ENCODE measurements at regions of chr9 and their contacts with region 1.

Region 1: GRCh38 chr9:72856972-72857623 is 95.8 kb downstream of the ALDH1A1 start:
- DNase-seq: peak; percentile 28
- ATAC-seq: peak; percentile 68

Region 2: DNA sequence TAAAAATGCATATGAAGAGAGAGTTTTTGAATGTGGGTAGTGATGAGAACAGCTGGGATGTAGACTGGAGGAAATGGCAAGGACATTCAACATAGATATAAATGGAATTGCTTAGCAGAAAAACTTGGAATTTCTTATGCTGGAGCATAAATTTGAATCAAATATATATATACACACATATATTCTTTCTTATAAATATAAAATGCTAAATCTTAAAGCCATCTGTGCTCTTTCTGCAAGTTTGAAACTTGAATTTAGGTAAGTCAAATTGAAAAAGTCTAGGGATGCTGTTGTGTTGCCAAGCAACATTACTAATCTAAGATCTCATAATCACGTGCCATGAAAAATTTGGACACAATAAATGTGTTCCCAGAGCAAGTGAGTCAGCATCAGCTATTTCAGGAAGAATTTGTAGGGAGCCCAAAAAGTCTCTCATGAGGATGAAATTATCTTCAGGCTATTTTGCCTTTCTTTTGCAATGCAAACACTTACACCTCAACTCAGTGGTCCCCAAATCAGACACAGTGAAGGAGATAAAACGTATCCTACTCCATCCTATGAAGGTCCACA is 154.2 kb after region 1 on chr9:
- intact Hi-C with region 1: no loop called
- DNase-seq: no peak
- ATAC-seq: peak; percentile 39

Region 3: GRCh38 chr9:73023025-73023541 is 166.0 kb after region 1 on chr9:
- intact Hi-C with region 1: loop called (anchors 5 kb)
- DNase-seq: no peak
- ATAC-seq: peak; percentile 31

Region 4: GRCh38 chr9:73081979-73082657 is 225.0 kb after region 1 on chr9:
- intact Hi-C with region 1: loop called (anchors 5 kb)
- DNase-seq: no peak
- ATAC-seq: no peak

Region 5: DNA sequence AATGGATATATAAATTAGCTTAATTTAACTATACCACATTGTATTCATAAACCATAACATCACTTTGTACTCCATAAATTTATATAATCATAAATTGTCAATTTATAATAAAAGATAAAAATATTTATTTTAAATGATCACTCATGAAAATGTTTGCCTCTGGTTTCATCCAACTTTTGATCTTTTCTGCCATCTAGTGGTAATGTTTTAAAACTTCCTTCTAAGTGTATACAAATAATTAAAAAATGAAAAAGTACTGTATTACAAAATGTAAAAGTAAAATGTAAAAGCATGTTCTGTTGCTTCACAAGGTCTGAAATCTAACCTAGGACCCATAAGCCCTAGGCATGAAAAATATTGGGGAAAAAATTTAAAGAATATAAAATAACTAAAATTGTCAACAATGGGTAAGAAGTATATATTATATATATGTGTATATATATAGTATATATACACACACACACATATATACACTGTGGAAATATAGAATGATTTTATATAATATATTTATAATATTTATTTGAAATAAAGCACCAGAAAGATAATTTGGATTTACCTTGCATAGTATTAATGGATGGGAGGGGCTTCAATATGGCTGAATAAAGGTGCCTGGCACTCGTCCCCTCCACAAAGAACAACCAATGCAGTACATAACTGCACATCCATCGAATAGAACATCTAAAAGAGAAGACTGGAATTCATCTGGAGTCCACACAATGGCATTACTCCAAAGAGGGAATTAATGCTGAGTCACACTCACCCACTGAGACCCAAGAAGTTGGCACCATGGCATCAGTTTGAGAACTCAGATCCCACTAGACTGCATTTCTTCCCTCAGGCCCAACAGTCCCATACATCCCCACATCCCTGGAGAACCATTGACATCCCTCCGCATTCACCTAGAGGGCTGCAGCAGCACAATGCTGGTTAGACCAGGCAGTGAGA is 327.1 kb after region 1 on chr9:
- intact Hi-C with region 1: loop called (anchors 5 kb)
- DNase-seq: no peak
- ATAC-seq: no peak

Measured in Right ventricle myocardium inferior (tissue), 1 donor.